ENCODE measurements at regions of chr9 and their contacts with region 1.

Region 1: DNA sequence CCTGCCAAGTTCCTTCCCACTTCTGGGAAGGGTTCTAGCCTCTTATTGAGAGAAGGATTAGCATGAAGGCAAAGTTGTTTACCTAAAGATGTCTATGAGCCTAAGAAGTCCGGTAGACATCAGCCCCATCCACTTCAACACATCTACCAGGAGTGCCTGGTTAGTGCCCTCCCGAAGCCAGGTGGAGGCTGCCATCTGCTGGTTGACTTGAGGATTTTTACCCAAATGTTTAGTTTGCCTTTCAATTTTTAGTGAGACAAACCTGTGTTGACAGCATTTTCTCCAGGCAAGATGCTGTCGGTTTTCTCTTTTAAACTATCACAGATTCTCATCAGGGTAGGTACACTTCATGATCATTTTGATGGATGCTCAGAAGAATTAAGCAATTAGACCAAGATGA is 83.6 kb upstream of the TNFSF8 start:
- H3K4me3 ChIP-seq: no peak overlapping the region
- H3K27ac ChIP-seq: no peak overlapping the region
- H3K4me1 ChIP-seq: peaks cover 3% of the 10 kb centered on the region; the same call in 1 of the 2 replicates
- CTCF ChIP-seq: peak; percentile 61

Region 2: GRCh38 chr9:114405294-114406034 is 608.5 kb before region 1 on chr9:
- CTCF ChIA-PET with region 1: interaction called, 16 read pairs
- POLR2A ChIA-PET with region 1: no interaction called
- H3K4me3 ChIP-seq: no peak overlapping the region
- H3K27ac ChIP-seq: no peak overlapping the region
- H3K4me1 ChIP-seq: no peaks in the 10 kb centered on the region
- CTCF ChIP-seq: peak; percentile 81

Region 3: GRCh38 chr9:114738581-114739316 is 275.2 kb before region 1 on chr9:
- CTCF ChIA-PET with region 1: interaction called, 24 read pairs
- POLR2A ChIA-PET with region 1: no interaction called
- H3K4me3 ChIP-seq: no peak overlapping the region
- H3K27ac ChIP-seq: no peak overlapping the region
- H3K4me1 ChIP-seq: no peaks in the 10 kb centered on the region; the same call in 1 of the 2 replicates
- CTCF ChIP-seq: peak; percentile 40; the same call in 1 of the 2 replicates

Region 4: GRCh38 chr9:114919611-114920010 is 94.4 kb before region 1 on chr9:
- CTCF ChIA-PET with region 1: interaction called, 15 read pairs
- POLR2A ChIA-PET with region 1: no interaction called
- H3K4me3 ChIP-seq: no peak overlapping the region
- H3K27ac ChIP-seq: no peak overlapping the region
- H3K4me1 ChIP-seq: no peaks in the 10 kb centered on the region
- CTCF ChIP-seq: no peak

Region 5: GRCh38 chr9:115058684-115059315 is 44.8 kb after region 1 on chr9:
- CTCF ChIA-PET with region 1: no interaction called
- POLR2A ChIA-PET with region 1: no interaction called
- H3K4me3 ChIP-seq: no peak overlapping the region
- H3K27ac ChIP-seq: no peak overlapping the region
- H3K4me1 ChIP-seq: no peaks in the 10 kb centered on the region
- CTCF ChIP-seq: no peak

Region 6: GRCh38 chr9:115524453-115525059 is 510.6 kb after region 1 on chr9:
- CTCF ChIA-PET with region 1: interaction called, 10 read pairs
- POLR2A ChIA-PET with region 1: no interaction called
- H3K4me3 ChIP-seq: no peak overlapping the region
- H3K27ac ChIP-seq: no peak overlapping the region
- H3K4me1 ChIP-seq: no peaks in the 10 kb centered on the region
- CTCF ChIP-seq: peak; percentile 57; the same call in 1 of the 2 replicates